ENCODE measurements at regions of chr9 and their contacts with region 1.

Region 1: GRCh38 chr9:33721674-33722358 is 73.5 kb upstream of the PRSS3 start:
- DNase-seq: peak; percentile 61 to 98
- H3K4me3 ChIP-seq: no peak overlapping the region
- H3K27ac ChIP-seq: no peak overlapping the region
- H3K4me1 ChIP-seq: peaks cover 0 to 1% (median 0%) of the 10 kb centered on the region in 4 experiments; a peak in 2 of 7 replicates
- H3K27me3 ChIP-seq: peaks cover 0 to 5% (median 3%) of the 10 kb centered on the region in 4 experiments; a peak in 3 of 7 replicates
- CTCF ChIP-seq: peak; percentile 97 to 100 (median 100)
- EP300 ChIP-seq: no peak
- POLR2A ChIP-seq: no peak
- RAD21 ChIP-seq: peak; percentile 98

Region 2: GRCh38 chr9:33350310-33350709 is 371.5 kb before region 1 on chr9:
- CTCF ChIA-PET with region 1: no interaction called
- POLR2A ChIA-PET with region 1: no interaction called
- DNase-seq: no peak
- H3K4me3 ChIP-seq: no peak overlapping the region
- H3K27ac ChIP-seq: no peak overlapping the region
- H3K4me1 ChIP-seq: no peaks in the 10 kb centered on the region
- H3K27me3 ChIP-seq: no peaks in the 10 kb centered on the region
- CTCF ChIP-seq: no peak
- EP300 ChIP-seq: no peak
- POLR2A ChIP-seq: no peak
- RAD21 ChIP-seq: no peak

Region 3: DNA sequence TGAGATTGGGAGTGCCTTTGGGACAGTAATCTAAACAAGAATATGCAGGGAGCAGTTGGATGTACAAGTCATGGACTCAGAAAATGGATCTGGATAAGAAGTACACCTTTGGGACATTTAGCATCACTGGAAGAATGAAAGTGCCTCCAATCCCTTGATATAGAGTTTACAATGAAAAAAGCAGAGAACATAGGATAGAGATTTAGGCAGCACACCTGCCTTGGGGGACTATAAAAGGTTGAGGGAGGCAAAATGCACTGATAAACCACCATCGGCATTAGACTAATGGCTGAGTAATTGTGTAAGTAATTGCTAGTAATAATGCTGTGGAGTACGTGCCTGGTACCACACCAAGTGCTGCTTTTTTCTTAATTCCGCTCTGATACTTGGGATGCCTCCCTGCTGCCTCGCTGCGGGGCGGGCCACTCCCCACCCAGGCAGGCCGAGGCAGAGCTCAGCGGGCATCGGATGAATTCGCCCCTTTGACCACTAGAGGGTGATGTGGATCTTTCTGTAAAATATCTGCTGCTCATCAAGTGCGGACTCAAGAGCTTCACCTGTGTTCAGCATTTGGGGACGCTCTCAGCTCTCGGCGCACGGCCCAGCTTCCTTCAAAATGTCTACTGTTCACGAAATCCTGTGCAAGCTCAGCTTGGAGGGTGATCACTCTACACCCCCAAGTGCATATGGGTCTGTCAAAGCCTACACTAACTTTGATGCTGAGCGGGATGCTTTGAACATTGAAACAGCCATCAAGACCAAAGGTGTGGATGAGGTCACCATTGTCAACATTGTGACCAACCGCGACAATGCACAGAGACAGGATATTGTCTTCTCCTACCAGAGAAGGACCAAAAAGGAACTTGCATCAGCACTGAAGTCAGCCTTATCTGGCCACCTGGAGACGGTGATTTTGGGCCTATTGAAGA is 97.9 kb before region 1 on chr9:
- CTCF ChIA-PET with region 1: interaction called, 402 read pairs
- POLR2A ChIA-PET with region 1: interaction called, 8 read pairs
- DNase-seq: peak; percentile 77 to 84
- H3K4me3 ChIP-seq: no peak overlapping the region
- H3K27ac ChIP-seq: no peak overlapping the region
- H3K4me1 ChIP-seq: no peaks in the 10 kb centered on the region
- H3K27me3 ChIP-seq: peaks cover 0 to 3% (median 0%) of the 10 kb centered on the region in 4 experiments; a peak in 1 of 7 replicates
- CTCF ChIP-seq: peak; percentile 79 to 98 (median 90)
- EP300 ChIP-seq: no peak
- POLR2A ChIP-seq: no peak
- RAD21 ChIP-seq: peak; percentile 92 to 95

Region 4: GRCh38 chr9:33638391-33638915 is 83.4 kb before region 1 on chr9:
- CTCF ChIA-PET with region 1: interaction called, 36 read pairs
- POLR2A ChIA-PET with region 1: no interaction called
- DNase-seq: no peak
- H3K4me3 ChIP-seq: no peak overlapping the region
- H3K27ac ChIP-seq: no peak overlapping the region
- H3K4me1 ChIP-seq: no peaks in the 10 kb centered on the region
- H3K27me3 ChIP-seq: no peaks in the 10 kb centered on the region
- CTCF ChIP-seq: peak in 1 of 3 experiments; percentile 10; a peak in 1 of 4 replicates
- EP300 ChIP-seq: no peak
- POLR2A ChIP-seq: no peak
- RAD21 ChIP-seq: no peak

Region 5: GRCh38 chr9:33687779-33688178 is 34.0 kb before region 1 on chr9:
- CTCF ChIA-PET with region 1: interaction called, 12 read pairs
- POLR2A ChIA-PET with region 1: no interaction called
- DNase-seq: no peak
- H3K4me3 ChIP-seq: no peak overlapping the region
- H3K27ac ChIP-seq: no peak overlapping the region
- H3K4me1 ChIP-seq: no peaks in the 10 kb centered on the region
- H3K27me3 ChIP-seq: no peaks in the 10 kb centered on the region
- CTCF ChIP-seq: no peak
- EP300 ChIP-seq: no peak
- POLR2A ChIP-seq: no peak
- RAD21 ChIP-seq: no peak

Region 6: DNA sequence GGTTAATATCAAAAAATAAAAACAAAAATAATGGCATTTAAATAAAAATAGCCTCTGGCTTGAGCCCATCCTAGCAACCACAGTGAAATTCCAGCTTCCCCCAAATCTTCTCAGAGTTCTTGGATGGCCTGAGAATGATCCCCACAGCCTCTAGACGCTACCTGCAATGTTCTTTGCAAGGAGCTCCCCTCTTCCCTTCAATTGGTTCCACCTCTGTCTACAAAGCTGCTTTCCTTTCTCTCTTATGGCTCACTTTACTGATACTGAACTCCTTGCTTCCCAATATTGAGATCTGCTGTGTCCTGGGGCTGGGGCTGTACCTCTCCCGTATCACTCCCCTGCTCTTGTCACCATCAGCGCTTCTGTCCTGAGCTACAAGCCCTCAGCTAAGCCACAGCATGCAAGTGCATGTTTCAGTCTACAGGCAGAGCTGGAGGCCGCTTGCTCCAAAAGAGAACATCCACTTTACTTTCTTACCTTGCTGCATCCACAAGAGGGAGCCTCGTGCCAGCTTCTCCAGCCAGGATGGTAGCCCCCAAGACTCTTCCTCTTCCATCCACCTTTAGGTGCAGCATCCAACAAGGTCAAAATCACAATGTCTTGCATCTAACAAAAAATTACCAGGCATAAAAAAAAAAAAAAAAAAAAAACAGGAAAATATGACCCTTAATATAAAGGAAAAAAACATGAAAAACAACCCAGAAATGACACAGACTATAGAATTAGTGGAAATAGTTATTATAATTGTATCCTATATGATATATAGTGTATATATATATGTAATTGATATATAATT is 16.2 kb after region 1 on chr9:
- CTCF ChIA-PET with region 1: interaction called, 40 read pairs
- POLR2A ChIA-PET with region 1: interaction called, 3 read pairs
- DNase-seq: peak in 1 of 2 experiments; percentile 65
- H3K4me3 ChIP-seq: no peak overlapping the region
- H3K27ac ChIP-seq: no peak overlapping the region
- H3K4me1 ChIP-seq: no peaks in the 10 kb centered on the region
- H3K27me3 ChIP-seq: no peaks in the 10 kb centered on the region
- CTCF ChIP-seq: peak; percentile 57 to 96 (median 83)
- EP300 ChIP-seq: no peak
- POLR2A ChIP-seq: no peak
- RAD21 ChIP-seq: peak; percentile 82 to 86